Posterior vena cava (tissue), 2 donors: ENCODE measurements at regions of chr12 and their contacts with region 1.

Region 1: DNA sequence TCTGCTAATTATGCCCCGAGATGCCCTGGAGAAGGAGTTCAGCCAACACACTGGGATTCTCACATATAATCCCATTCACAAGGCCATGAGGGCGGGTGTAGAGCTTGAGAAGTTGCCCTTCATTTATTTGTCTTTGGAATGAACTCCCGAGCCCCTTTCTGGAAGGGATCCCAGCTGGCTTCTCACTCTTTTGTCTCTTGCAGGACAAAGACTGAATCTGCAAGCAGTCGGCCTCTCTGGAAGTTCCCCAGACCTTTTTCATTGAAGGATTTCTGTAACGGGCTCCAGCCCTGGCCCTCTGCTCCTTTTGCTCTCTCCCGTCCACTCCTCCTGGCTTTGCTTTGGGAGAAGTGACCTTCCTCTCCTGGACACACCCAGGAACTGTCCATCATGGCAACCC is 163.3 kb upstream of the SFSWAP start:
- DNase-seq: no peak

Region 2: DNA sequence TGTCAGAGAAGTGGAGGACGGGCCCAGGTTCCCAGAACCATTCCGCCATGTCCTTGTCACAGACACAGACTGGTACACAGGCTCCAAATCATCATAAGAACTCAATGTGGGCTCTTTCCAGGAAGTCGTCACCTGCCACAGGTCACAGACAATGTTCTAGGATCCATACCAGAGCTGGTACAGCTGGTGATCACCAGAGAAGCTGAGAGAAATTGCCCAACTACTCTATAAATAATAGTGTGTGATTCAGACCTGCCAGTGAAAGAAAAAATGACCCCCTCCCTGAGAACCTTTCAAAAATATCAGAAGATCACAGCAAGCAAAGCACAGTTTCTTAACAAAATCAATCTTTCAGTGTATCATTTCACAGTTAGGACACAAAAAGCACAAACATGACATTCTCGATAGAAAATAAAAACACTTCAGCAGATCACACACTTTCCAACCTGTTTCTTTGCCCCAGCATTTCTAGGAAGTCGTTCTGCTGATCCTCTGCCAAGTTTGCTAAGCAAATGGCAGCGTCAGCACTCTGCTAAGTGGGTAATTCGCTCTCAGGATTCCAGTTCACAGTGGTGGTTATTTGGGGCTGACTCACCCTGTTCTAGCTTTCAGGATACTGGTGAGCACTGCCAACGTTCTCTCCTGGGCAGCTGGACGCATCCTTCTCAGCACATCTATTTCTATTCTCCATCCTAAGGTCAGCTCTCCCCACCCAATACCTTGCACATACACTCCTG is 60.0 kb before region 1 on chr12:
- intact Hi-C with region 1: loop called in 1 of 2 experiments (anchors 2 kb)
- DNase-seq: no peak

Region 3: GRCh38 chr12:131621701-131622421 is 74.3 kb after region 1 on chr12:
- intact Hi-C with region 1: no loop called
- DNase-seq: peak; percentile 73